PC-3 (cell line): ENCODE measurements at regions of chr2 and their contacts with region 1.

Region 1: GRCh38 chr2:167411367-167411766 is 523.1 kb downstream of the XIRP2 start:
- DNase-seq: peak; percentile 40
- ATAC-seq: peak; percentile 50; the same call in 1 of the 2 replicates
- H3K4me3 ChIP-seq: no peak overlapping the region
- H3K27ac ChIP-seq: no peak overlapping the region
- H3K4me1 ChIP-seq: no peaks in the 10 kb centered on the region
- H3K27me3 ChIP-seq: no peaks in the 10 kb centered on the region
- CTCF ChIP-seq: peak; percentile 55

Region 2: GRCh38 chr2:166494140-166494624 is 917.2 kb before region 1 on chr2 and contains the start of gene SCN7A:
- CTCF ChIA-PET with region 1: interaction called, 19 read pairs
- POLR2A ChIA-PET with region 1: no interaction called
- intact Hi-C with region 1: no loop called
- DNase-seq: peak; percentile 23
- ATAC-seq: peak; percentile 80
- H3K4me3 ChIP-seq: no peak within 1 kb of the TSS
- H3K27ac ChIP-seq: no peak within 1 kb of the TSS
- H3K4me1 ChIP-seq: no peaks in the 10 kb centered on the region
- H3K27me3 ChIP-seq: peaks cover 52% of the 10 kb centered on the region
- CTCF ChIP-seq: no peak
- total RNA-seq, gene SCN7A: not detected in 2 replicates

Region 3: DNA sequence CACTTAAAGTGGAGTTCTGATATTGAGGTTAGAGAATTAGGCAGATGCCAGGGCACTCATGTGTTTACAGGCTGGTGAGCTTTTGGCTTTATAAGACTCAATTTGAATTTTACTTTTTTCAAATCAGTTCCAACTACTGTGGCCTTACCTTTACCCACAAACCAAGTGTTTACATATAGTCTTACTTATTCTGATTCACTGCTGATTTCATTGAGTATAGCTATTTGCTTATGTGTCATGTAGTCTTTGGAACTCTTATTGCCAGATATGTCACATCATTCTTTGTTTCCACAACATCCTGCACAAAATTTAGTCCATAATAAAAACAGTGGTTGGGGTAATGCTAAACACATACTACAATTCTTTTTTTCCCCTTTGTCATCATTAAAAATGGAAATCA is 426.6 kb before region 1 on chr2:
- CTCF ChIA-PET with region 1: no interaction called
- POLR2A ChIA-PET with region 1: no interaction called
- intact Hi-C with region 1: no loop called
- DNase-seq: peak; percentile 89
- ATAC-seq: peak; percentile 99
- H3K4me3 ChIP-seq: no peak overlapping the region
- H3K27ac ChIP-seq: peak overlapping the region; percentile 77
- H3K4me1 ChIP-seq: peaks cover 18% of the 10 kb centered on the region
- H3K27me3 ChIP-seq: no peaks in the 10 kb centered on the region
- CTCF ChIP-seq: no peak

Region 4: DNA sequence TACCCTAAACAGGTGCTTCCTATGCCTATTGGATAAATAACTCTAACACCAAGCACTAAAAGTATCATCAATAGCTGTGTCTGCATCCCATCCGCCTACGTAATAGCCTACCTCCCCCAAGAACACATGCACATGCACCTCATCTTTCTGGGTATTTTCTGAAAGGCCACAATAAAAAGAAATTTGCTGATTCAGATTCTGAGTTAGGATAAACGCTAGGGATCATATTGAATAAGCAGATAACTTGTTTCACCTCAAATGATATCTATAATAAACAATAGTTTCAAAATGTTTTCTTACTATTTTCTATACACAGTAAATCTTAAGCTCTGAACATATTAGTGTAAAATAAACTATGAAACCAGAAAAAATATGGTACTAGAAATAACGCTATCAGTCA is 410.2 kb before region 1 on chr2:
- CTCF ChIA-PET with region 1: no interaction called
- POLR2A ChIA-PET with region 1: no interaction called
- intact Hi-C with region 1: loop called (anchors 5 kb)
- DNase-seq: no peak
- ATAC-seq: no peak
- H3K4me3 ChIP-seq: no peak overlapping the region
- H3K27ac ChIP-seq: no peak overlapping the region
- H3K4me1 ChIP-seq: peaks cover 14% of the 10 kb centered on the region; the same call in 1 of the 2 replicates
- H3K27me3 ChIP-seq: no peaks in the 10 kb centered on the region
- CTCF ChIP-seq: no peak

Region 5: GRCh38 chr2:167127135-167127534 is 284.2 kb before region 1 on chr2:
- CTCF ChIA-PET with region 1: interaction called, 9 read pairs
- POLR2A ChIA-PET with region 1: no interaction called
- intact Hi-C with region 1: loop called (anchors 1 kb)
- DNase-seq: peak; percentile 70
- ATAC-seq: peak; percentile 95
- H3K4me3 ChIP-seq: no peak overlapping the region
- H3K27ac ChIP-seq: no peak overlapping the region
- H3K4me1 ChIP-seq: peaks cover 3% of the 10 kb centered on the region; the same call in 1 of the 2 replicates
- H3K27me3 ChIP-seq: no peaks in the 10 kb centered on the region
- CTCF ChIP-seq: peak; percentile 68

Region 6: DNA sequence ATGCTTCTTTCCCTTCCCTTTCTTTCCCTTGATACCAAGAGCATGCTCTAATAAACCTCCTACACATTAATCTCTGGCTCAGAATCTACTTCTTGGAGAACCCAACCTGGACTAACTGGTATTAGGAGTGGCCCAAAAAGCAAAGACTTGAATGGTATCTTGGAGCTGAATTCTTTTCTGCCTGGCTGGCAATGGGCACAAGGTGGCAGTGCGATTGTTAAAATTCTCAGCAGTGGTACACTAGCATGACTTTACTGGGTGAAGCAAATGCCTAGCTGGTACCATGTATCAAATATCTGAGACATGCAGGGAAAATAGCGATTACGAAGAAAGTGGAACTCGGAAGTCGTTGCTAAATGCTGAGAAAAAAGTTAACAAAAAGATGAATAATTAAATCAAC is 147.0 kb before region 1 on chr2:
- CTCF ChIA-PET with region 1: interaction called, 9 read pairs
- POLR2A ChIA-PET with region 1: no interaction called
- intact Hi-C with region 1: loop called (anchors 1 kb)
- DNase-seq: peak; percentile 71
- ATAC-seq: peak; percentile 95
- H3K4me3 ChIP-seq: no peak overlapping the region
- H3K27ac ChIP-seq: no peak overlapping the region
- H3K4me1 ChIP-seq: no peaks in the 10 kb centered on the region
- H3K27me3 ChIP-seq: no peaks in the 10 kb centered on the region
- CTCF ChIP-seq: peak; percentile 87

Region 7: DNA sequence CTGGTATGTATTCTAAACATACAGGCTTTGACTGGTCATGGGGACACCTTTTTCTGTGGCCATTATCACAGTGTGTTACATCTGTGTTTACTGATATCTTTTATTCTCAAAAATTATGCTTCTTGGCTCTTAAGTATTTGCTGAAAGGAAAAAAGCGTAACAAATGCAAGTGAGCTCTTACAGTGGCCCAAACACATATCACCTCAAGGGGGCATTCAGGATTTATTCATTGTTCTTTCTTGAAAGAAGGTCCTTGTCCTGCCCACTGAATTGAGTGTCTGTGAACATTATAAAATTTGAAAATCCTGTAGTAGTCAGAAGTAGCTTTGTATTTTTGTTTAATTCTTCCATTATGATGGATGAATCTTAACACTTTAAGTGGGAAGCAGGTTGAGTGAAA is 68.6 kb before region 1 on chr2:
- CTCF ChIA-PET with region 1: interaction called, 3 read pairs
- POLR2A ChIA-PET with region 1: interaction called, 7 read pairs
- intact Hi-C with region 1: loop called (anchors 5 kb)
- DNase-seq: peak; percentile 23
- ATAC-seq: no peak; the same call in 1 of the 2 replicates
- H3K4me3 ChIP-seq: no peak overlapping the region
- H3K27ac ChIP-seq: no peak overlapping the region
- H3K4me1 ChIP-seq: no peaks in the 10 kb centered on the region
- H3K27me3 ChIP-seq: no peaks in the 10 kb centered on the region
- CTCF ChIP-seq: peak; percentile 52

Region 8: GRCh38 chr2:167424803-167425755 is 13.7 kb after region 1 on chr2:
- CTCF ChIA-PET with region 1: no interaction called
- POLR2A ChIA-PET with region 1: no interaction called
- intact Hi-C with region 1: no loop called
- DNase-seq: peak; percentile 57
- ATAC-seq: peak; percentile 94
- H3K4me3 ChIP-seq: no peak overlapping the region; the same call in 1 of the 2 replicates
- H3K27ac ChIP-seq: no peak overlapping the region
- H3K4me1 ChIP-seq: peaks cover 15% of the 10 kb centered on the region
- H3K27me3 ChIP-seq: no peaks in the 10 kb centered on the region
- CTCF ChIP-seq: no peak

Region 9: GRCh38 chr2:167462379-167462778 is 51.0 kb after region 1 on chr2:
- CTCF ChIA-PET with region 1: no interaction called
- POLR2A ChIA-PET with region 1: no interaction called
- intact Hi-C with region 1: no loop called
- DNase-seq: no peak
- ATAC-seq: no peak
- H3K4me3 ChIP-seq: no peak overlapping the region
- H3K27ac ChIP-seq: no peak overlapping the region
- H3K4me1 ChIP-seq: no peaks in the 10 kb centered on the region
- H3K27me3 ChIP-seq: no peaks in the 10 kb centered on the region
- CTCF ChIP-seq: no peak